PC-9 (cell line): ENCODE measurements at regions of chr2 and their contacts with region 1.

Region 1: GRCh38 chr2:193076995-193077394 is 882.3 kb upstream of the TMEFF2 start:
- DNase-seq: no peak
- H3K4me3 ChIP-seq: no peak overlapping the region
- H3K27ac ChIP-seq: no peak overlapping the region
- H3K4me1 ChIP-seq: no peaks in the 10 kb centered on the region
- H3K27me3 ChIP-seq: no peaks in the 10 kb centered on the region
- CTCF ChIP-seq: no peak

Region 2: DNA sequence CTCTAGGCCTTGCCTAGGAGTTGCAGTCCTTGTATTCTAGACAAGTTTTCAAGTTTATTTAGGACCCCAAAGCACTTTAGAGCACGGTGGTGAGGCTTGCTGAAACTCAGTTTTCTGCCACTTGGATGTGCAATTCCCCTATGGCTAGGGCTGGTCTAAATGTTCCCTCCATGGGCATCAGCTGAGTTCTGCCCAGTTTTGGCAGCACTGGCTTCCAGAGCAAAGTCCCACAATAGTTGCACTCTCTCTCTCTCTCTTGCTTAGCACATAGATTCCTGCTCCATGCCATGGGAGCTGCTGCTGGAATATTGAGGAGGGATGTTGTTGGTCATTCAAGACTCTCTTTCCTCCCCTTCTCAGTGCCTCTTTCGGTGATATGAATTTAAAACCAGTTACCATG is 1819.9 kb after region 1 on chr2:
- CTCF ChIA-PET with region 1: interaction called, 13 read pairs
- POLR2A ChIA-PET with region 1: no interaction called
- intact Hi-C with region 1: no loop called
- DNase-seq: no peak
- H3K4me3 ChIP-seq: no peak overlapping the region
- H3K27ac ChIP-seq: no peak overlapping the region
- H3K4me1 ChIP-seq: no peaks in the 10 kb centered on the region
- H3K27me3 ChIP-seq: no peaks in the 10 kb centered on the region
- CTCF ChIP-seq: no peak